Left lung (tissue), 14 donors: ENCODE measurements at regions of chr14 and their contacts with region 1.

Region 1: DNA sequence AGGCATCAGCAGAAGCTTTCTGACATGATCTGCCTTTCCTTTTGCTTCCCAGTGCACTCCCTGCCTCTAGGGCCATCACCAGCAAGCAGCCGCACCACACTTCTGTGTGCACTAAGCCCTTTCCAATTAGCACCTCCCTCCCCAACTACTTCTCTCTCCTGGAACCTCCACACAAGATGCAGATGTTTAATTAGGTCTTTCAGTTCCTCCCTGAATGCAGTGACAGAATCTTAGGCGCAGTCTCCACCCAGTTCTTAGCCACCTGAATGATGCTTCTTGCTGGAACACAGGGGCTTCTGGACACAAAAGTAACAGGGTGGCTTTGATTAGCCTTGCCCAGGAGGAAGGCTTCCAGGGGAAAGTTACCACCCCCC is 32.9 kb downstream of the NIN start:
- DNase-seq: no peak
- ATAC-seq: no peak
- H3K4me3 ChIP-seq: no peak overlapping the region
- H3K27ac ChIP-seq: no peak overlapping the region
- H3K4me1 ChIP-seq: peaks cover 0 to 12% of the 10 kb centered on the region in 2 donors
- H3K27me3 ChIP-seq: no peaks in the 10 kb centered on the region
- CTCF ChIP-seq: no peak

Region 2: GRCh38 chr14:50726372-50727107 is 71.5 kb before region 1 on chr14:
- intact Hi-C with region 1: no loop called
- DNase-seq: no peak
- ATAC-seq: no peak
- H3K4me3 ChIP-seq: no peak overlapping the region
- H3K27ac ChIP-seq: no peak overlapping the region
- H3K4me1 ChIP-seq: no peaks in the 10 kb centered on the region
- H3K27me3 ChIP-seq: no peaks in the 10 kb centered on the region
- CTCF ChIP-seq: no peak

Region 3: DNA sequence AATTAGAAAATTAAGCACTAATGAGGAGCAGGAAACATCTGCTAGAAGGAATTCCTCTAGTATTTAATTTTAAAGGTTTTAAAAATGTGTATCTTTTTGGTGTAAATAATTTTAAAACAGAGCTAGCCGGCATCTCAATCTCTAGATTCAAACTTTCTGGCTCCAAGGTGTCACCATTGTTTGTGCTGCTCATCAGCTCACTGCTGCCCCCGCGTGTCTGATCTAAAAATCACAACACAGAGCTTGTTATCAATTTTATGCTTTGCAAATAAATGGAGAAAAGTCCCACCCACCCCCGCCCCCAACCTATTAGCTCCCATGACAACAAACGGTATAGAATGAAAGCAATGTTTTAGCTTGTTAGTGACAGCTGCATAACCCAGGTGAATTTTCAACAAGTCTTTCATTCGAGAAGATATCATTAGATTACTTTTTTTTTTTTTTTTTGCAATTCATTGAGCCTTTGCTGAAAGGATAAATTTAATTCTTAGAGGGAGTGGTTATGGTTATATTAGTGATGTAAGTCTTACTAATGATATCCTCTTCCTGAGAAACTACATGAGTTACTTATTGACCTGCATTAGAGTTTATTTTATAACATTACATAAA is 62.5 kb after region 1 on chr14:
- intact Hi-C with region 1: loop called in 1 of 2 experiments (anchors 10 kb)
- DNase-seq: peak; percentile 70 to 86 (median 80)
- ATAC-seq: peak; percentile 94
- H3K4me3 ChIP-seq: peak overlapping the region; percentile 52 to 55
- H3K27ac ChIP-seq: peak overlapping the region; percentile 72 to 73
- H3K4me1 ChIP-seq: peaks cover 5 to 19% of the 10 kb centered on the region in 2 donors
- H3K27me3 ChIP-seq: no peaks in the 10 kb centered on the region
- CTCF ChIP-seq: peak; percentile 66 to 76

Region 4: GRCh38 chr14:51353901-51354300 is 555.9 kb after region 1 on chr14:
- intact Hi-C with region 1: no loop called
- DNase-seq: no peak
- ATAC-seq: no peak
- H3K4me3 ChIP-seq: no peak overlapping the region
- H3K27ac ChIP-seq: no peak overlapping the region
- H3K4me1 ChIP-seq: no peaks in the 10 kb centered on the region
- H3K27me3 ChIP-seq: no peaks in the 10 kb centered on the region
- CTCF ChIP-seq: no peak